Dendritic cell treated with granulocyte-macrophage colony-stimulating factor and Interleukin-4, amounts not matched to agents 40 ng/mL and 50 ng/mL, for 4 days (primary cell): ENCODE measurements at regions of chr15 and their contacts with region 1.

Region 1: DNA sequence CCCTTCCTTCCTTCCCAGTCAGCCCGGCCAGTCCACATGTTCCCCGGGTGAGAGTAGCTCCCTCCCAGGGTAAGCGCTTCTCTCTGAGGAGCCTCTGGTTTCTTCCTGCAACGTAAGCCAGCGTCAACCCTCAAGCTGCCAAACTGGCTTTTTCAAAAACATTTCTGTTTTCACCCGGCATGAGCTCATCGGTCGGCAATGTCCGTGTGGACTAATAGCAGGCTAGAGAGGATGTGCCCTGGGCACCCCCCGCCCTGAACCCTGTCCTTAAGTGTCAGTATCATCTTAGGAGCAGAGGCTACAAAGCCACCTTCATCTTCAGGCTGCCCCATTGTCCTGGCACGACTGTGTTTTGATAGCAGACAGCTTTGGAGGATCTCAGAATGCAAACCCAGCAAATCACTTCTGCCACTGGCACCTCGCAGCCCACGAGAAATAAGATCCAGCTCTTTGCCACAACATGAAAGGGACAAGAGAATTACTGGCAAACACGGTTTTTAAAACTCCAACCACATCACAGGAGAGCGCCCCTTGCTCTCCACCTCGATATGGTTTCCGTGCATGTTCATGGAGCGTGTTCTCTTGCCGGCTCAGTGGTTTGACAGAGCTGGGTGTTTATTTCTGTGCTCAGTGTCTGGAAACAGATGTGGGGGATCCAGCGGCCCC is 9.9 kb downstream of the ALDH1A3 start:
- H3K4me3 Mint-ChIP-seq: no peak overlapping the region
- H3K27ac Mint-ChIP-seq: no peak overlapping the region
- H3K4me1 Mint-ChIP-seq: no peaks in the 10 kb centered on the region
- H3K27me3 Mint-ChIP-seq: peaks cover 83% of the 10 kb centered on the region

Region 2: DNA sequence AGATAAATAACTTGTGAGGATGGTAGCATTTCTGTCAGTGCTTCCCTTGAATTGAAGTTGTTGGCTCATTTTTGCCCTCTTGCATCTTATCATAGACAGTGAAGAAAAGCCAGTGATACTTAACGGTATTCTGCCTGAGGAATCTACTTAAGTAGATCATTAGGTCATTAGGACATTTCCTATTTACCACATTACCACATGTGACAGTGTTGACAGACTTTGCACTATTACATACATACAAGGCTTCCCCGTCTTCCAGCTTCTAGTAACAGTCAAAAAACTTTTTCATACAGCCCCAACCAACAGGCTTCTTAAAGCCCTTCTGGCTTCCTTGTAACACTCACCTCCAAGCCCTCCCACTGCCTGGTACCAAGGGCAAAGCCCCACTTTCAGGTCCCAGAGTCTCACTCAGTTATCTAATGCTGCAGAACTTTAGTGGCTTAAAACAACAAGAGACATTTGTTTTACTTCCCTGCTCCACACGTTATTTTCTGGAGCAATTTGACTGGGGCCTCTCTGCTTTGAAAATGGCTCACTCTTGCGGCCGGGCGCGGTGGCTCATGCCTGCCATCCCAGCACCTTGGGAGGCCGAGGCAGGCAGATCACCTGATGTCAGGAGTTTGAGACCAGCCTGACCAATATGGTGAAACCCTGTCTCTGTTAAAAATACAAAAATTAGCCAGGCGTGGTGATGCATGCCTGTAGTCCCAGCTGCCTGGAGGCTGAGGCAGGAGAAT is 247.1 kb before region 1 on chr15:
- intact Hi-C with region 1: loop called (anchors 10 kb)
- H3K4me3 Mint-ChIP-seq: no peak overlapping the region
- H3K27ac Mint-ChIP-seq: no peak overlapping the region
- H3K4me1 Mint-ChIP-seq: peaks cover 18% of the 10 kb centered on the region
- H3K27me3 Mint-ChIP-seq: no peaks in the 10 kb centered on the region

Region 3: GRCh38 chr15:100733101-100733788 is 156.3 kb before region 1 on chr15:
- intact Hi-C with region 1: no loop called
- H3K4me3 Mint-ChIP-seq: no peak overlapping the region
- H3K27ac Mint-ChIP-seq: no peak overlapping the region
- H3K4me1 Mint-ChIP-seq: peaks cover 6% of the 10 kb centered on the region
- H3K27me3 Mint-ChIP-seq: peaks cover 1% of the 10 kb centered on the region